Heart left ventricle (tissue), 16 donors: ENCODE measurements at regions of chr6 and their contacts with region 1.

Region 1: DNA sequence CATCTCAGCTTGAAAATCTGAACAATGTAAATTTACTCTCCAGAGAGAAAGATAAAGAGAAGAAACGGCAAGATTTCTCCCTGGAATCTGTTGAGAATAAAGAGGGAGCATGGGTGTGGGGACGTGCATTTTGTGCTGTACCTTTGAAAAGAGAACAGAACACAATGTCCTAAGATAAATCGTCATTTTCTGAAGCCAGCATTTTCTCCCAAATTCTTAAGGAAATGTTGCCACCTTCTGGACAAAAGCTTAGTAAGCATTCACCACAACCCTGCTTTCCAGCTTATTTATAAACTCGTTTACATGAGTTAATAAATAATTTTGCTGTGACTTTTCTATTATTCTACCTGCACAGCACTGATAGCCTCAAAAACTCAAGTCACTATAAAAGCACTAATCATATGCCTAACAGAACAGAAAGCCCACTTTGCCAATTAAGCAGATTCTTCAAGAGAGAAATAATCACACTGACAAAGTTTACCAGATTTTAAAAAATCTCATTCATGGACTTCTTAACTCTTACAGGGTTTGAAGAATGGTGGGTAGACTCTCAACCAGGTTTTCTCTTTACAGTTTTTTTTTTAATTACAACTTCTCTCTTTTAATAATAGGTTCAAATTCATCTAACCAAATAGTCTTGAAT is 155.8 kb downstream of the MBOAT1 start:
- DNase-seq: no peak
- ATAC-seq: peak in 2 of 4 donors; percentile 24 to 51
- H3K4me3 ChIP-seq: no peak overlapping the region
- H3K27ac ChIP-seq: no peak overlapping the region
- H3K4me1 ChIP-seq: no peaks in the 10 kb centered on the region
- H3K27me3 ChIP-seq: no peaks in the 10 kb centered on the region
- CTCF ChIP-seq: peak; percentile 21 to 67 (median 44)
- POLR2A ChIP-seq: no peak

Region 2: GRCh38 chr6:18527836-18528743 is 1528.4 kb before region 1 on chr6:
- intact Hi-C with region 1: loop called in 1 of 10 experiments (anchors 5 kb)
- DNase-seq: no peak
- ATAC-seq: no peak
- H3K4me3 ChIP-seq: no peak overlapping the region
- H3K27ac ChIP-seq: no peak overlapping the region
- H3K4me1 ChIP-seq: no peaks in the 10 kb centered on the region
- H3K27me3 ChIP-seq: no peaks in the 10 kb centered on the region
- CTCF ChIP-seq: peak in 8 of 12 donors; percentile 8 to 36 (median 26)
- POLR2A ChIP-seq: no peak

Region 3: DNA sequence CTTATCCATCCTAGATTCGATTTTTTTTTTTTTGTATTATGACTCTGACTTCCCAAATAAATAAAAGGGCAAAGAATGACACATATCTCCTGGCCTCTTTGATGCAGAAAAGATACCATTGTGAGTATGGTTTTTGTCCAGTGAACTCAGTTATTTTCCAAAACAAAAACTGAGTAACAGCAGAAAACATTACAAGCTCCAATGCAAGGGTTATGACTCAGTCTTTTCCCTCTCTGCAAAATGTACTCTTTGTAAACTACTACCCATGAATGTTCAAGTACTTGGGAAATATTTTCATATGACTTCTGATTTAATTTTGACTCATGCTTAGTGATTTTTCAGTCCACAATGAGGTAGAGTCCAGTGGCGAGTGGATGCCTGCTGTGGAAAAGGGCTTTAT is 1314.1 kb before region 1 on chr6:
- intact Hi-C with region 1: loop called in 2 of 10 experiments (anchors 10 kb)
- DNase-seq: no peak
- ATAC-seq: no peak
- H3K4me3 ChIP-seq: no peak overlapping the region
- H3K27ac ChIP-seq: no peak overlapping the region
- H3K4me1 ChIP-seq: no peaks in the 10 kb centered on the region
- H3K27me3 ChIP-seq: peaks cover 0 to 4% (median 0%) of the 10 kb centered on the region in 9 donors
- CTCF ChIP-seq: no peak
- POLR2A ChIP-seq: no peak

Region 4: GRCh38 chr6:18990059-18990978 is 1066.2 kb before region 1 on chr6:
- intact Hi-C with region 1: loop called in 2 of 10 experiments (anchors 10 kb)
- DNase-seq: peak; percentile 64 to 80 (median 74)
- ATAC-seq: peak in 3 of 4 donors; percentile 62 to 75 (median 74)
- H3K4me3 ChIP-seq: peak overlapping the region in 3 of 12 donors; percentile 8 to 11 (median 11)
- H3K27ac ChIP-seq: no peak overlapping the region
- H3K4me1 ChIP-seq: peaks cover 0 to 7% (median 0%) of the 10 kb centered on the region in 12 donors
- H3K27me3 ChIP-seq: no peaks in the 10 kb centered on the region
- CTCF ChIP-seq: peak; percentile 42 to 75 (median 58)
- POLR2A ChIP-seq: no peak

Region 5: DNA sequence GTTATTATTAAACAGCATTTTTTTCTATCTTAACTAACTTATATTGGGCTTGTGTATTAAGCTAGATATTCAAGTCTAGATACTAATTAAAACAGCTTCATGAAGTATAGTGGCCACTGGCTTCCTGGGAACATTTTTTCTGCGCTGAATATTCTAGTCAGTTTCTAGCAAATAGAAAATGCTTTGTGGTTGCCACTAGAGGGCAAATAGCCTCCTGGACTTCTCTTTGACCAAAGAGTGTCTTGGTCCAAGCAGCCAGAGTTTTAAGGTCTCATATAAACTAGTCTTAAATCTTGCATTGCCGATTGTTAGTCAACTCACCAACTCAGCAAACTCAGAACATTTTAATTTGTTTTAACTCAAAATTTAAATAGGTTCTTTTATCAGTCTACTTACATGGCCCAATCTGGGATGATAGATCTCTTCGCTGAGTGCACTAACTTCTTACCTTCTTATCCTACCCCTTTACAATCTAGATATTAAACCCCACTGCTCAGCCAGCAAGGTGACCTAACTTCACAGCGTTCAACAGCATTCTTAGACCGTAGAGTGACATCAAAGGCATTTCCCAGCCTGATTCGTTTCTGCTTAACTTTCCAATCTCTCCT is 243.9 kb before region 1 on chr6:
- intact Hi-C with region 1: loop called in 1 of 10 experiments (anchors 10 kb)
- DNase-seq: no peak
- ATAC-seq: peak in 1 of 4 donors; percentile 51
- H3K4me3 ChIP-seq: no peak overlapping the region
- H3K27ac ChIP-seq: no peak overlapping the region
- H3K4me1 ChIP-seq: no peaks in the 10 kb centered on the region
- H3K27me3 ChIP-seq: peaks cover 0 to 3% (median 0%) of the 10 kb centered on the region in 9 donors
- CTCF ChIP-seq: peak; percentile 27 to 71 (median 56)
- POLR2A ChIP-seq: no peak

Region 6: DNA sequence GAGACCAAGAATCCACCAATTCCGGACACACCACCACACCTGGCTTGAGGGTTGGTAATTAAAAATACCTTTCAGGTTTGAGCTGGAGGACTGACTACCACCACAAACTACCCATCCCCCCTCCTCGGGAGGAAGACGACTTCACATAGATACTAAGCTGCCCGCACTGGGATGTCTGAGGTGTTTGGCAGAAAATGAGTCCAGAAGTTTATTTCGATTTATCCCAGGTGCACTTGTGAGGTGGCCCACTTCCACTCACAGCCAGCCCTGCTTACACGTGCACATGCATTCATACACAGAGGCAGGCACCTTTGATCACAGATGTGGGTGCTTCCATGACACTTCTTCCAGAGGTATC is 32.2 kb before region 1 on chr6:
- intact Hi-C with region 1: no loop called
- DNase-seq: no peak
- ATAC-seq: no peak
- H3K4me3 ChIP-seq: peak overlapping the region in 1 of 12 donors; percentile 12
- H3K27ac ChIP-seq: no peak overlapping the region
- H3K4me1 ChIP-seq: no peaks in the 10 kb centered on the region
- H3K27me3 ChIP-seq: no peaks in the 10 kb centered on the region
- CTCF ChIP-seq: no peak
- POLR2A ChIP-seq: no peak